Aorta (tissue), 5 donors: ENCODE measurements at regions of chr3 and their contacts with region 1.

Region 1: GRCh38 chr3:40584625-40585189 is 59.9 kb downstream of the ZNF621 start:
- DNase-seq: peak; percentile 93 to 96
- ATAC-seq: peak; percentile 94
- H3K4me3 ChIP-seq: no peak overlapping the region
- H3K27ac ChIP-seq: no peak overlapping the region
- H3K4me1 ChIP-seq: no peaks in the 10 kb centered on the region
- H3K27me3 ChIP-seq: no peaks in the 10 kb centered on the region

Region 2: GRCh38 chr3:40557575-40558161 is 27.0 kb before region 1 on chr3:
- intact Hi-C with region 1: no loop called
- DNase-seq: no peak
- ATAC-seq: no peak
- H3K4me3 ChIP-seq: no peak overlapping the region
- H3K27ac ChIP-seq: no peak overlapping the region
- H3K4me1 ChIP-seq: no peaks in the 10 kb centered on the region
- H3K27me3 ChIP-seq: no peaks in the 10 kb centered on the region

Region 3: DNA sequence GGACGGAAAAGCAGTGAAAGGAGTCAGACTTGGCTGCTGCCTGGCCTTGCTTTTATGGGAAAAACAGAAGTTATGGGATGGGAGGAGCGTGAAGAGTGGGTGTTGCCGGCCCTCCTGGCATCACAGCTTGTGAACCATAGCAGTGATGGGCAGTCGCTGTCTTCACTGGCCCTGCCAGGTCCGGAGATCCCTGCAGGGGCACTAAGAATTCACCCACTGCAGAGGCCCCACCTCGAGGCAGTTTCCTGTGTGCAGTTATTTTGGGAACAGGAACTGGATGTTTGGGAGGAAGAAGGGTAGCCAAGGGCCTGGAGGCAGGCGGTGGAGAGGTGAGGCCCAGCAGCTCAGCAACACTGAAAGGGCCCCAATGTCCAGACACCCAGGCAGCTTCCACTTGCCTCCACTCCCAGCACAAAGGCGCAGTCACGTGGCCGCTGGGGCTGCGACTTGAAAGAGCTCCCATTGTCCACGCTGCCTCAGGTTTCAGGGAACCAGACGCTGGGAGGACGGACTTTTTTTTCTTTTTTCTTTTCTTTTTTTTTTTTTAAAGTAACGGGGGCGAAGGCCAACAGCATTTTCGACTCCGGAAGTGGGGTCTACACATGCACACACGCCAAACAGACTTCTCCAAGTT is 195.7 kb after region 1 on chr3:
- intact Hi-C with region 1: loop called in 1 of 2 experiments (anchors 10 kb)
- DNase-seq: peak; percentile 88 to 92
- ATAC-seq: peak; percentile 90
- H3K4me3 ChIP-seq: no peak overlapping the region
- H3K27ac ChIP-seq: peak overlapping the region; percentile 31 to 84
- H3K4me1 ChIP-seq: no peaks in the 10 kb centered on the region
- H3K27me3 ChIP-seq: no peaks in the 10 kb centered on the region

Region 4: GRCh38 chr3:41035456-41036022 is 450.8 kb after region 1 on chr3:
- intact Hi-C with region 1: loop called in 1 of 2 experiments (anchors 10 kb)
- DNase-seq: no peak
- ATAC-seq: no peak
- H3K4me3 ChIP-seq: no peak overlapping the region
- H3K27ac ChIP-seq: no peak overlapping the region
- H3K4me1 ChIP-seq: no peaks in the 10 kb centered on the region
- H3K27me3 ChIP-seq: peaks cover 0 to 3% of the 10 kb centered on the region in 2 donors

Region 5: DNA sequence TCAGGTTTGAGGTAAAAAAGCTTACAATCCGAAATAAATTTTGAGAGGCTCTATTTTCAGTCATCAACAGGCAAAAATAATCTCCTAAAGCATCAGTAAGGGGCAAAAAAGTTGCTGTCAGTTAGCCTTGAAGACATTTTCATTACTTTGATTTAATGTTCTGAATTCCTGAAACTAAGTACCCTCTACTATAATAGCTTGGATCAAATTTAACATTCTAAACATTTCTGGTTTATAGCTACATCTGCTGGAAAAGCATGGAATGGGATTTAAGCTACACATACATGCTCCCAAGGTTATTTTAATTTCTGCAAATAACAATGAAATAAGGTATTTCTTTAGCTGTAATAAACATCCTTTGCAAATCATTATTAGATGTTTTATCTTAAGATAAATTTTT is 1131.8 kb after region 1 on chr3:
- intact Hi-C with region 1: loop called in 1 of 2 experiments (anchors 10 kb)
- DNase-seq: no peak
- ATAC-seq: no peak
- H3K4me3 ChIP-seq: no peak overlapping the region
- H3K27ac ChIP-seq: no peak overlapping the region
- H3K4me1 ChIP-seq: no peaks in the 10 kb centered on the region
- H3K27me3 ChIP-seq: no peaks in the 10 kb centered on the region